CD4-positive, alpha-beta memory T cell (primary cell): ENCODE measurements at regions of chr12 and their contacts with region 1.

Region 1: DNA sequence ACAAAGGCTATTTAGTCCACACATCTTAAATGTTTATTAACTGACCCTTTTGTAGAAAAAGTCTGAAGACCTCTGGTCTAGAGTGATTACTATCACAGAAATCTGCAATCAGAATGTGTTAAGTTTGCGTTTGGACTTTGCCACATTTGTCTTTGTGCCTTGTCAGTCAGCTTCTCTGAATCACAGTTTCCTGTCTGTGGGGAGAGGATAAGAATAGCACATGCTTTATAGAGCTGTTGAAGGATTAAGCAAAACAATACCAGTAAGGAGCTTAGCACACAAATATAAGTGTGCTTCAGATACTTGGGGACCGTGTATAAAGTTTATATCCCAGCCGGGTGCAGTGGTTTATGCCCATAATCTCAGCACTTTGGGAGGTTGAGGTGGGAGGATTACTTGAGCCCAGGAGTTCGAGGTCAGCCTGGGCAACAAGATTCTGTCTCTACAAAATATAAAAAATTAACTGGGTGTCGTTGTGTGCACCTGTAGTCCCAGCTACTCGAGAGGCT is 63.0 kb upstream of the BTG1 start:
- DNase-seq: peak; percentile 61 to 78 (median 66)
- H3K4me3 ChIP-seq: peak overlapping the region in 1 of 2 donors; percentile 30
- H3K4me3 Mint-ChIP-seq: peak overlapping the region; percentile 63 to 88 (median 81)
- H3K27ac ChIP-seq: peak overlapping the region; percentile 19
- H3K27ac Mint-ChIP-seq: peak overlapping the region; percentile 77 to 95 (median 86)
- H3K4me1 ChIP-seq: peaks cover 31% of the 10 kb centered on the region
- H3K4me1 Mint-ChIP-seq: peaks cover 26 to 42% (median 35%) of the 10 kb centered on the region in 4 donors
- H3K27me3 ChIP-seq: no peaks in the 10 kb centered on the region
- H3K27me3 Mint-ChIP-seq: no peaks in the 10 kb centered on the region

Region 2: GRCh38 chr12:91991399-91992187 is 217.1 kb before region 1 on chr12:
- CTCF ChIA-PET with region 1: interaction called, 5 read pairs
- POLR2A ChIA-PET with region 1: interaction called, 4 read pairs
- intact Hi-C with region 1: loop called (anchors 1 kb)
- DNase-seq: peak in 4 of 5 donors; percentile 51 to 67 (median 54)
- H3K4me3 ChIP-seq: no peak overlapping the region
- H3K4me3 Mint-ChIP-seq: no peak overlapping the region
- H3K27ac ChIP-seq: no peak overlapping the region
- H3K27ac Mint-ChIP-seq: peak overlapping the region in 5 of 7 donors; percentile 22 to 85 (median 70)
- H3K4me1 ChIP-seq: peaks cover 27% of the 10 kb centered on the region
- H3K4me1 Mint-ChIP-seq: peaks cover 18 to 37% (median 28%) of the 10 kb centered on the region in 4 donors
- H3K27me3 ChIP-seq: no peaks in the 10 kb centered on the region
- H3K27me3 Mint-ChIP-seq: no peaks in the 10 kb centered on the region

Region 3: DNA sequence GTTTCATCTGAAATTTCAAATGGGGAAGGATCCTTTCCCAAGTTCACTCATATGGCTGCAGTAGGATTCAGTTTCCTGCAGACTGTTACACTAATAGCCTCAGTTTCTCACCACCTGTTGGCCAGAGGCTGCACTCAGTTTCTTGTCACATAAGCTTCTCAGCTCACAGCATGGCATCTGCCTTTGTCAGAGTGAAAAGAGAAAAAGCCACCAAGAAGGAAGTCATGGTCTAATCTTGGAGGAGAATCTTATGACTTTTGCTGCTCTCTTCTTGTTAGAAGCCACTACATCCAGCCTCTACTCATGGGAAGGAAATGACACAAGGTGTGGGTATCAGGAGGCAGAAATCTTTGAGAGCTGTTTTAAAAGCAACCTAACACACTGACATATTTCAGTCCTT is 23.6 kb before region 1 on chr12:
- CTCF ChIA-PET with region 1: interaction called, 3 read pairs
- POLR2A ChIA-PET with region 1: interaction called, 10 read pairs
- intact Hi-C with region 1: loop called (anchors 1 kb)
- DNase-seq: peak; percentile 56 to 67 (median 58)
- H3K4me3 ChIP-seq: peak overlapping the region in 1 of 2 donors; percentile 21
- H3K4me3 Mint-ChIP-seq: peak overlapping the region; percentile 26 to 84 (median 64)
- H3K27ac ChIP-seq: peak overlapping the region; percentile 60
- H3K27ac Mint-ChIP-seq: peak overlapping the region; percentile 64 to 92 (median 82)
- H3K4me1 ChIP-seq: peaks cover 39% of the 10 kb centered on the region
- H3K4me1 Mint-ChIP-seq: peaks cover 32 to 69% (median 54%) of the 10 kb centered on the region in 4 donors
- H3K27me3 ChIP-seq: no peaks in the 10 kb centered on the region
- H3K27me3 Mint-ChIP-seq: no peaks in the 10 kb centered on the region

Region 4: DNA sequence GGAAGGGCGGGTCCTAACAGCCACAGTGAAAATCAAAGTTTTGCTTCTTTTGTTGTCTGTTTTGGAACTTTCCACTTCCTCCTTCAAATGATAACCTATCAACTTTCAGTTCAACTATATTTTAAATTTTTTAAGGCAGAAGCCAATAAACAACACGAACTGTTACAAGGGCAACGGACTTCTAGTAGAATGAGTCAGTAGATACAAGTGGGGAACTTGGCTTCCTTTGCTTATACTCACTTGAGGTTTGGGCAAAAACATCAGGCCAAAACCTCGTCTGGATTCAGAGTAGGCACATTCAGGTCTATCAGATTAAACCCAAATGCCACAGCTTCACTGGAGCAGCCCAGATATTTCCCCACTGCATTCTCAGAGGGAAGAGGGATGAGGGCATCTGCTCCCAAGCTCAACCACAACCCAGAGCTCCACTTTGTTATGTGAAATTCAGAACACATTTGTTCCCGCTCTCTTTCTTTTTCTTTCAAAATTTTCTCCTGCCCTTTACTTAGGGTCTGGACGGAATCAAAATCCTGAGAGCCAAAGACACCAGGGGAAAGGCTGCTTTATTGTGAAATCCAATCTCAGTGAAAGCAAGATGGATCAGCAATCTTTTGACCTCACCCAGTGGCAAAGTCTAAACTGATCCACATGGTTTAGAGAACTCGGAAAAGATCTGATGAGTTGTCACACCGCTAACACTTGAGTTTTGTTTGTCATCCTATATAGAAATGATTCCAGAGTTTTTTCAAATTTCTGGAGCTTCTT is 89.4 kb after region 1 on chr12:
- CTCF ChIA-PET with region 1: no interaction called
- POLR2A ChIA-PET with region 1: interaction called, 14 read pairs
- intact Hi-C with region 1: no loop called
- DNase-seq: peak in 4 of 5 donors; percentile 33 to 49 (median 46)
- H3K4me3 ChIP-seq: no peak overlapping the region
- H3K4me3 Mint-ChIP-seq: peak overlapping the region; percentile 28 to 78 (median 72)
- H3K27ac ChIP-seq: no peak overlapping the region
- H3K27ac Mint-ChIP-seq: peak overlapping the region in 5 of 7 donors; percentile 76 to 93 (median 93)
- H3K4me1 ChIP-seq: peaks cover 40% of the 10 kb centered on the region
- H3K4me1 Mint-ChIP-seq: peaks cover 21 to 33% (median 28%) of the 10 kb centered on the region in 4 donors
- H3K27me3 ChIP-seq: no peaks in the 10 kb centered on the region
- H3K27me3 Mint-ChIP-seq: no peaks in the 10 kb centered on the region

Region 5: GRCh38 chr12:92363295-92364146 is 154.9 kb after region 1 on chr12:
- CTCF ChIA-PET with region 1: no interaction called
- POLR2A ChIA-PET with region 1: interaction called, 12 read pairs
- intact Hi-C with region 1: loop called (anchors 10 kb)
- DNase-seq: peak; percentile 40 to 76 (median 49)
- H3K4me3 ChIP-seq: peak overlapping the region; percentile 14 to 34
- H3K4me3 Mint-ChIP-seq: peak overlapping the region; percentile 44 to 92 (median 78)
- H3K27ac ChIP-seq: peak overlapping the region; percentile 41
- H3K27ac Mint-ChIP-seq: peak overlapping the region; percentile 85 to 97 (median 94)
- H3K4me1 ChIP-seq: peaks cover 66% of the 10 kb centered on the region
- H3K4me1 Mint-ChIP-seq: peaks cover 42 to 75% (median 60%) of the 10 kb centered on the region in 4 donors
- H3K27me3 ChIP-seq: no peaks in the 10 kb centered on the region
- H3K27me3 Mint-ChIP-seq: no peaks in the 10 kb centered on the region

Region 6: GRCh38 chr12:92593734-92594402 is 385.2 kb after region 1 on chr12:
- CTCF ChIA-PET with region 1: no interaction called
- POLR2A ChIA-PET with region 1: interaction called, 5 read pairs
- intact Hi-C with region 1: loop called (anchors 1 kb)
- DNase-seq: peak; percentile 87 to 97 (median 94)
- H3K4me3 ChIP-seq: peak overlapping the region in 1 of 2 donors; percentile 37
- H3K4me3 Mint-ChIP-seq: peak overlapping the region in 7 of 8 donors; percentile 43 to 88 (median 71)
- H3K27ac ChIP-seq: peak overlapping the region; percentile 91
- H3K27ac Mint-ChIP-seq: peak overlapping the region; percentile 86 to 100 (median 100)
- H3K4me1 ChIP-seq: peaks cover 35% of the 10 kb centered on the region
- H3K4me1 Mint-ChIP-seq: peaks cover 27 to 38% (median 35%) of the 10 kb centered on the region in 4 donors
- H3K27me3 ChIP-seq: no peaks in the 10 kb centered on the region
- H3K27me3 Mint-ChIP-seq: no peaks in the 10 kb centered on the region